ENCODE measurements at regions of chr10 and their contacts with region 1.

Region 1: DNA sequence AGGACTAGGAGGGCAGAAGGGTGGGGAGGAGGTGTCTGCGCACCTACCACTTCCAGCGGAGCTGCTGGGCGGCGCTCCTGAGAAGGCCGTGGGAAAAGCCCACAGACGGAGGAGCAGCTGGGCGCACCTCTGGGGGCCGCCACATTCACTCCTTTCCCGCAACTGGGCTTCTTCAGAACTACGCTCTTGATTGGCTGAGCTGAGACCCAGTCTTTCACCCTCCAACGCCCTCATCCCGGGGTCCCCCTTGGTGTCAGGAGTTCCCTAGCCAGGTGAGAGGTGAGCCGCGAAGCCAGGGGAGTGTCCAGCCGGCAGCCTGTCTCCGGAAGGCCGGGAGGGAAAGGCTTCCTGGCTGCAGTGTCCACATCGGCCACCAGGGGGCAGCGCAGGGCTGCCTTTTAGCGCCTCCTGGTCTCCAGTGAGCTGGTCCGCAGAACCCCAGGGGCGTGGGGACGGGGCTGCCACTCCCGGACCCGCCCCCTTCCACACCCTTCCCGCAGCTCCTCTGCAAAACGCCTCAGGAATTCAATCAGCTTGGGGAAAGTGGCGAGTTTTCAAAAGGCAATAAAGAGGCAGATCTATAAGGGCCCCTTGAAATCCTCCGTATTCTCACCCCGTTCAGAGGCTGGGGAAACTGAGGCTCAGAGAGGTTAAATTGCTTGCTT is 98.8 kb downstream of the CHST15 start:
- DNase-seq: peak; percentile 74
- ATAC-seq: peak; percentile 78
- H3K4me3 ChIP-seq: peak overlapping the region; percentile 60 to 73
- H3K27ac ChIP-seq: peak overlapping the region; percentile 84
- H3K4me1 ChIP-seq: peaks cover 17 to 30% of the 10 kb centered on the region in 2 experiments
- H3K27me3 ChIP-seq: no peaks in the 10 kb centered on the region
- CTCF ChIP-seq: peak in 2 of 3 experiments; percentile 99; a peak in 4 of 6 replicates
- POLR2A ChIP-seq: no peak
- RAD21 ChIP-seq: no peak

Region 2: DNA sequence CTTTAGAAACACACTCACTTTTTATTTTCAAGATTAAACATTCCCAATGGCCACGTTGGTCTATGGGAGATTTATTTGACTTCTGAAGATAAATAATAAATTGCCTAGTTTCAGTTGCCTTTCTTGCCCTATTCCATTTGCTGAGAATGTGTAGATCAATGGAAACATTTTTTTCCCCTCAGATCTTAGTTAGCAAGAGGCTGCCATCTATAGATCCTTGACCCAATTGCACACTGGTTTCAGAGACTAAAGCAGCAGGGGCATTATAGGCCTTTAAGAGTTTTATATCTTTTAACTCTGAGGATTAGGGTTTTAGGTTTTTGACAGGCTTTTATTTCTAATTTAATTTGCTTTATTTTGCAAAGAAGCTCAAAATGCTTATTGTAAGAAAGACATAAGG is 491.6 kb before region 1 on chr10:
- CTCF ChIA-PET with region 1: no interaction called
- POLR2A ChIA-PET with region 1: no interaction called
- RAD21 ChIA-PET with region 1: no interaction called
- intact Hi-C with region 1: no loop called
- DNase-seq: no peak
- ATAC-seq: no peak
- H3K4me3 ChIP-seq: no peak overlapping the region
- H3K27ac ChIP-seq: no peak overlapping the region
- H3K4me1 ChIP-seq: no peaks in the 10 kb centered on the region
- H3K27me3 ChIP-seq: no peaks in the 10 kb centered on the region; the same call in 1 of the 2 replicates
- CTCF ChIP-seq: no peak
- POLR2A ChIP-seq: no peak
- RAD21 ChIP-seq: peak; percentile 38

Region 3: GRCh38 chr10:123974406-123974805 is 20.1 kb before region 1 on chr10:
- CTCF ChIA-PET with region 1: interaction called, 11 read pairs
- POLR2A ChIA-PET with region 1: no interaction called
- RAD21 ChIA-PET with region 1: no interaction called
- intact Hi-C with region 1: no loop called
- DNase-seq: peak; percentile 99
- ATAC-seq: peak; percentile 93
- H3K4me3 ChIP-seq: no peak overlapping the region; a peak in 1 of 4 replicates
- H3K27ac ChIP-seq: peak overlapping the region; percentile 24; the same call in 1 of the 2 replicates
- H3K4me1 ChIP-seq: peaks cover 17 to 31% of the 10 kb centered on the region in 2 experiments
- H3K27me3 ChIP-seq: no peaks in the 10 kb centered on the region; the same call in 1 of the 2 replicates
- CTCF ChIP-seq: no peak
- POLR2A ChIP-seq: peak; percentile 39
- RAD21 ChIP-seq: no peak

Region 4: DNA sequence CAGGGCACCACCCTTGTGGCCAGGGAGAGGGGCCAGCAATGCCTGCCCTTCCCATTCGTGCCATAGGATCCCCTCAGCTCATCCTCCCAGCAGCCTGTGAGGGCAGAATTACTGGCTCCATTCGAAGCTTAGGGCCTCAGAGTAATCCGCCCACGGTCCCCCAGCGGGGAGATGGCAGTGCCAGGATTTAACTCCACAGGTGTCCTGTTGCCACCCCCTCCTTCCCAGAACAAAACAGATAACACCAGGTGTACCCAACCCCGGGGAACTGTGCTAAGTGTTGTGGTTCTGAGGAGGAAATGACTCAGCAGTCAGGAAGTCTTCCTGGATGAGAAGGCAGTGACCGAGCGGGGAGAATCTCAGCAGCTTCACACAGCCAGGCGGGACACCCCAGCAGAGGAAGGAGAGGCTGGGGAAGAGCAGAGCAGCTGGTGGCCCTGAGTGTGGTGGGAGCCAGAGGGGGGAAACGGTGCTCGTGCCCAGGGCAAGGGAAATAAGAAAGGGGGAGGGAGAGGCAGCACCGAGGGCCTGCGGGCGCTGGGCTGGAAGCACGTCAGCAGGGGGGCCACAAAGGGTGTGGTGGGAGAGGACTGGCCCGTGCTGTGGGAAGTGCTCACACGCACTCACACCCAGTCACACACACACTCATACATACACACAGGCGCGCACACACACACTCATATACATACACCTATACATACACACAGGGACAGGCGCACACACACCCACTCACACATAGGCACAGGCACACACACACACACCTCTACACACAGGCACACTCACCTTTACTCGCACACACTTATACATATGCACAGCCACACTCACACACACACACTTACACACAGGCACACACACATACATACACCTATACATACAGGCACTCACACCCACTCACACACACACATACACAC is 158.6 kb after region 1 on chr10:
- CTCF ChIA-PET with region 1: interaction called, 23 read pairs
- POLR2A ChIA-PET with region 1: interaction called, 9 read pairs
- RAD21 ChIA-PET with region 1: interaction called, 6 to 16 read pairs
- intact Hi-C with region 1: loop called (anchors 1 kb)
- DNase-seq: peak; percentile 100
- ATAC-seq: peak; percentile 80
- H3K4me3 ChIP-seq: peak overlapping the region; percentile 45 to 57
- H3K27ac ChIP-seq: peak overlapping the region; percentile 94
- H3K4me1 ChIP-seq: peaks cover 50 to 66% of the 10 kb centered on the region in 2 experiments
- H3K27me3 ChIP-seq: no peaks in the 10 kb centered on the region
- CTCF ChIP-seq: no peak
- POLR2A ChIP-seq: no peak
- RAD21 ChIP-seq: no peak

Region 5: DNA sequence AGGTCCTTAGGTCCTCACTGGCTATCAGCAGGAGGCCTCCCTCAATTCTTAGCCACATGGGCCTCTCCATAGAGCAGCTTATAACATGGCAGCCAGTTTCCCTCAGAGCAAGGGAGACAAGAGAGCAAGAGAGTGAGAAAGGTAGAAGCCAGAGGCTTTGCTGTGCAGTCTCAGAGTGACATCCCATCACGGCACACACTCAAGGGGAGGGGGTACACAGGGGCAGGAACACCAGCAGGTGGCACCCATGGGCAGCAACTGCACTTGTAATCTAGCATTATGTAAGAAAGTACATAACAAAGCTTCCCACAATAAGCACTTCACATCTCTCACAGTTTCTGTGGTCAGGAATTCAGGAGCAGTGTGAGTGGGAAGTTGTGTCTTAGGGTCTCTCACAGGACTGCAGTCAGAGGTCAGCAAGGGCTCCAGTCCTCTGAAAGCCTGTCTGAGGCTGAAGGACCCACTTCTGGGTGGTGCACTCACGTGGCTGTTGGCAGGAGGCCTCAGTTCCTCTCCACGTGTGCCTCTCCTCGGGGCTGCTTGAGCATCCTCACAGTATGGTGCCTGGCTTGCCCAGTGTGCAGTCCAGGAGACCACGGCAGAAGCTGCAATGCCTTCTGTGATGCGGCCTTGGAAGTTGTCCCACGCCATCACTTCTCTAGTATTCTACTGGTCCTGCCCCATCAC is 264.7 kb after region 1 on chr10:
- CTCF ChIA-PET with region 1: interaction called, 10 read pairs
- POLR2A ChIA-PET with region 1: no interaction called
- RAD21 ChIA-PET with region 1: interaction called in 1 of 2 experiments, 3 read pairs
- intact Hi-C with region 1: loop called (anchors 10 kb)
- DNase-seq: peak; percentile 21
- ATAC-seq: peak; percentile 84
- H3K4me3 ChIP-seq: no peak overlapping the region
- H3K27ac ChIP-seq: no peak overlapping the region
- H3K4me1 ChIP-seq: no peaks in the 10 kb centered on the region
- H3K27me3 ChIP-seq: no peaks in the 10 kb centered on the region
- CTCF ChIP-seq: peak; percentile 39 to 59 (median 40); a peak in 5 of 6 replicates
- POLR2A ChIP-seq: no peak
- RAD21 ChIP-seq: peak; percentile 64

Region 6: DNA sequence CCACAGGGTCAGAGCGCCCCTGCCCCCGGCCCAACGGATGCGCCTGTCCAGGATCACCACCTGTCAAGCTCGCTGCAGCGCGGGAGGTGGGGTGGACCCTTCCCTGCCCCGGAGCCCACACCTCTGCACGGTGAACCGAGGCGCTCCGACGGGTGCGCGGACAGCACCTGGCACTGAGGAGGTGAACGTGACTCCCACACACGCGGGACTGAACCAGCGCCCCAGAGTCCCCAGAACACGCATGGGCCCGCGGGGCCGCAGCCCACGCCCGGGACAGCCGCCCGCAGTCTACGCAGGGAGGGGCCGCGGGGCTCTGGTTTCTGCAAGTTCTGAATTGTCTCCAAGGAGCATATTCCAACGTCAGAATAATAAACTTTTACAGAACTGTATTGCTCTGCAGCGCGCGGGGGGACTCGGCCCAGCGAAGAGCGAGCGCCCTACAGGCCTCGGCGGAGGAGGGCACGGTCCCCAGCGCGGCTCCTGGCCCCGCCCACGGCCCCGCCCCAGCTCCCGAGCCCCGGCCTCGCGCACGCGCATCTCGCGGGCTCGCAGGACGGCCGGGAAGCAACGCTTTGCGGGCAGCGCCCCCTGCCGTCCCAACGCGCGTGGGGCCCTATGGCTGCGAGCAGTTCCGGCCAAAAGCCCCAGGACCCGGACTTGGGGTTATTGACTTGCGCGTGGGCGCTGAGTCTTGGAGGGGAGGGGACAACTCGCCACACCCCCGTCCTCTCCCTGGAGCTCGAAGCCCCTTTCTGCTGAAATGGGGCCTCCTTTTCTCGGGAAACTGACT is 394.5 kb after region 1 on chr10:
- CTCF ChIA-PET with region 1: interaction called, 269 read pairs
- POLR2A ChIA-PET with region 1: interaction called, 10 read pairs
- RAD21 ChIA-PET with region 1: interaction called, 49 to 61 read pairs
- intact Hi-C with region 1: loop called (anchors 1 kb)
- DNase-seq: peak; percentile 72
- ATAC-seq: peak; percentile 96
- H3K4me3 ChIP-seq: peak overlapping the region; percentile 22 to 29; a peak in 3 of 4 replicates
- H3K27ac ChIP-seq: peak overlapping the region; percentile 15; the same call in 1 of the 2 replicates
- H3K4me1 ChIP-seq: peaks cover 7 to 10% of the 10 kb centered on the region in 2 experiments
- H3K27me3 ChIP-seq: no peaks in the 10 kb centered on the region
- CTCF ChIP-seq: peak; percentile 96 to 98 (median 96)
- POLR2A ChIP-seq: peak; percentile 65
- RAD21 ChIP-seq: peak; percentile 100

Region 7: DNA sequence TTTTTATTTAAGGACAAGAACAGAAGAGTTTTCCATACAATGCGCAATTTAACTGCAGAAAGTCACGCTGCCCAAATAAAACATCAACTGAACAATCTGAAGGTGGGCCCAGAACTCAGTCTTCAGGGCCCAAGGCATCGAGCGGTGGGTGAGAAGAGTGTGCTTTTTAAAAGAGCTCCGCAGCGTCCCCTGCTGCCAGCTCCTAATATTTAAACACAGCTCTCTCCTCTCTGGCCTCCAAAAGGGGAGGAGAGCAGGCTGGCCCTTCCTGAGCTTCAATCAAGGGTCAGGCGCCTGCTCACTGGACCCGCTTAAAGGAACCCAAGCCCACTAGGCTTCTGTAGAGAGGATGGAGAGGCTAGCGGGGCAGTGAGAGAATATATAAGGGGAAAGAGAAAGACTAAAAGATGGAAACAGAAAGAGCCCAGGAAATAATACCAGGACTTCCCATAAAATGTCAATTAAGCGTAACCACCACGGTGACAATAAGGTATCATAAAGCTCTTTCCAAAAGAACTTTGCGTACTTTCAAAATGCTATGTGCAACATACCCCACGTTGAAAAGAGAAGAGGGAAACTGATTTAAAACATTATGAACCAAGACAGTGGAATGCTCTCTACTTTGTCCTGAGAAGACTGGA is 746.9 kb after region 1 on chr10:
- CTCF ChIA-PET with region 1: interaction called, 8 read pairs
- POLR2A ChIA-PET with region 1: no interaction called
- RAD21 ChIA-PET with region 1: no interaction called
- intact Hi-C with region 1: loop called (anchors 5 kb)
- DNase-seq: peak; percentile 50
- ATAC-seq: peak; percentile 60
- H3K4me3 ChIP-seq: no peak overlapping the region
- H3K27ac ChIP-seq: no peak overlapping the region
- H3K4me1 ChIP-seq: peaks cover 29 to 51% of the 10 kb centered on the region in 2 experiments
- H3K27me3 ChIP-seq: no peaks in the 10 kb centered on the region
- CTCF ChIP-seq: peak; percentile 76 to 92 (median 89)
- POLR2A ChIP-seq: no peak
- RAD21 ChIP-seq: peak; percentile 88